ENCODE measurements at regions of chr22 and their contacts with region 1.

Region 1: GRCh38 chr22:31630331-31631329 is 31.4 kb downstream of the PISD start:
- DNase-seq: peak; percentile 81 to 87
- H3K4me3 ChIP-seq: peak overlapping the region; percentile 60 to 94
- H3K27ac ChIP-seq: peak overlapping the region; percentile 71 to 87
- H3K4me1 ChIP-seq: peaks cover 5 to 58% (median 39%) of the 10 kb centered on the region in 4 donors
- H3K27me3 ChIP-seq: no peaks in the 10 kb centered on the region
- CTCF ChIP-seq: no peak

Region 2: GRCh38 chr22:31561238-31561887 is 69.3 kb before region 1 on chr22:
- intact Hi-C with region 1: loop called (anchors 5 kb)
- DNase-seq: peak; percentile 60 to 79
- H3K4me3 ChIP-seq: no peak overlapping the region
- H3K27ac ChIP-seq: peak overlapping the region; percentile 26
- H3K4me1 ChIP-seq: peaks cover 0 to 10% (median 5%) of the 10 kb centered on the region in 4 donors
- H3K27me3 ChIP-seq: no peaks in the 10 kb centered on the region
- CTCF ChIP-seq: peak; percentile 67 to 76